HEK293 (cell line): ENCODE measurements at regions of chr19 and their contacts with region 1.

Region 1: GRCh38 chr19:1249298-1249989 is 1.1 kb downstream of the MIDN start:
- H3K4me3 ChIP-seq: peak overlapping the region; percentile 92
- H3K27ac ChIP-seq: peak overlapping the region; percentile 100
- H3K4me1 ChIP-seq: peaks cover 8% of the 10 kb centered on the region
- CTCF ChIP-seq: peak; percentile 19; the same call in 1 of the 2 replicates

Region 2: DNA sequence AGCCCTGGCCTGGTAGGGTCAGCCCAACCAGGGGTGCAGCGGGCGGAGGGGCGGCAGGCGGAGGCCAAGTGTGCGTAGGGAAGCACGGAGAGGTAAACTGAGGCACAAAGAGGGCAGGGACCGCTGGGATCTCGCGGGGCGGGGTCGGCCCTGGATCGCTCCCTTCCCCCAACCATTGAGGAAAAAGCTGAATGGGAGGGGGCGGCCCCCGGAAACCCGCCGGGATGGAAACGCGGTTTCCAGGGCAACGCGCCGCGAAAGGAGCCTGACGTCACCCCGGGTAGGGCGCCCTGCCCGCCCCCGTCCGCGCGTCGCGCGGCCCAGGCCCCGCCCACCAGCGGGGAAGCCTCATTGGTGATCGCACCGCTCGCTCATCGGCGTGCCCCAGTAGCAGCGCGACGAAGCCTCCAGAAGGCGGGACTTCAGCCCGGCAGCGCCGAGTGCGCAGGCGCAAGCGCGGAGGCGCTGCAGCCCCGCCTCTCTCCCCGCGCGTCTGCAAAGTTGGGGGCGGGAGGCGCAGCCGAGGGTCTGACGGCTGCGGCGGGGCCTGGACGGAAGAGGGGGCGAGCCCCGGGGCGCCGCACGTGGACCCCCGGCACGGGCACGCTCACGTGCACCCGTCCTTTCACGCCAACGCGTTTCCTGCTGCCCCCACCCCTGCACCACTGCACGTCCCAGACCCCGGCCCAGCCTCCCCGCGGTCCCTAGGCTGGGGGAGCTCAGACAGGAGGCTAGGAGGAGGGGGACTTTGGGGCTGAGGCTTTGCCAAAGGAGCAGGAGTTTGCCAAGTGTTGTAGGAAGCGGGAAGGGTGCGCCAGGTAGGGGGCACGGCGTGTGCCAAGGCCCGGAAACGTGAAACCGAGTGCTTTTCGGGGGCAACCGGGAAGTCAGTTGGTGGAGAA is 11.4 kb after region 1 on chr19:
- CTCF ChIA-PET with region 1: interaction called, 299 read pairs
- POLR2A ChIA-PET with region 1: interaction called, 407 read pairs
- H3K4me3 ChIP-seq: peak overlapping the region; percentile 55
- H3K27ac ChIP-seq: peak overlapping the region; percentile 68; the same call in 1 of the 2 replicates
- H3K4me1 ChIP-seq: peaks cover 25% of the 10 kb centered on the region
- CTCF ChIP-seq: no peak

Region 3: DNA sequence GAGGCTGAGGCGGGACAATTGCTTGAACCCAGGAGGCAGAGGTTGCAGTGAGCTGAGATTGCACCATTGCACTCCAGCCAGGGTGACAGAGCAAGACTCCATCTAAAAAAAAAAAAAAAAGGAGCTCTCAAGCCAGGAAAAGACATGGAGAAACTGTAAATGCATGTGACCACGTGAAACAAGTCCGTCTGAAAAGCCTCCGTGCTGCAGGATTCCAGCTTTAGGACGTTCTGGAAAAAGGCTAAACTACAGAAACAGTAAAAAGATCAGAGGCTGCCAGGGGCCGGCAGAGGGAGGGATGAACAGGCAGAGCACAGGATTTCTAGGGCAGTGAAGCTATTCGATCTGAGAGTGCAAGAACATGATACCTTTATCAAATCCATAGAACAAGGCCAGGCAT is 93.6 kb after region 1 on chr19:
- CTCF ChIA-PET with region 1: no interaction called
- POLR2A ChIA-PET with region 1: no interaction called
- H3K4me3 ChIP-seq: no peak overlapping the region
- H3K27ac ChIP-seq: no peak overlapping the region
- H3K4me1 ChIP-seq: no peaks in the 10 kb centered on the region
- CTCF ChIP-seq: no peak